Activated CD8-positive, alpha-beta memory T cell treated with anti-CD3 and anti-CD28 coated beads, Interleukin-2, amount 10 ng/mL, durations not matched to agents 7 days and 5 days (primary cell): ENCODE measurements at regions of chr10 and their contacts with region 1.

Region 1: GRCh38 chr10:47024399-47025252 is 113.4 kb downstream of the PTPN20 start:
- DNase-seq: peak; percentile 74
- ATAC-seq: peak; percentile 74
- H3K4me3 Mint-ChIP-seq: no peak overlapping the region
- H3K27ac Mint-ChIP-seq: no peak overlapping the region
- H3K4me1 Mint-ChIP-seq: peaks cover 4% of the 10 kb centered on the region
- H3K27me3 Mint-ChIP-seq: no peaks in the 10 kb centered on the region

Region 2: GRCh38 chr10:47311932-47312662 is 287.5 kb after region 1 on chr10:
- CTCF ChIA-PET with region 1: interaction called, 45 read pairs
- DNase-seq: peak; percentile 85
- ATAC-seq: peak; percentile 86
- H3K4me3 Mint-ChIP-seq: no peak overlapping the region
- H3K27ac Mint-ChIP-seq: peak overlapping the region; percentile 32
- H3K4me1 Mint-ChIP-seq: peaks cover 14% of the 10 kb centered on the region
- H3K27me3 Mint-ChIP-seq: no peaks in the 10 kb centered on the region